ENCODE measurements at regions of chr19 and their contacts with region 1.

Region 1: GRCh38 chr19:13604902-13605586 is 98.8 kb upstream of the CACNA1A start:
- DNase-seq: no peak
- ATAC-seq: no peak
- H3K4me3 Mint-ChIP-seq: no peak overlapping the region
- H3K27ac Mint-ChIP-seq: no peak overlapping the region
- H3K4me1 Mint-ChIP-seq: peaks cover 6% of the 10 kb centered on the region
- H3K27me3 Mint-ChIP-seq: peaks cover 9% of the 10 kb centered on the region

Region 2: DNA sequence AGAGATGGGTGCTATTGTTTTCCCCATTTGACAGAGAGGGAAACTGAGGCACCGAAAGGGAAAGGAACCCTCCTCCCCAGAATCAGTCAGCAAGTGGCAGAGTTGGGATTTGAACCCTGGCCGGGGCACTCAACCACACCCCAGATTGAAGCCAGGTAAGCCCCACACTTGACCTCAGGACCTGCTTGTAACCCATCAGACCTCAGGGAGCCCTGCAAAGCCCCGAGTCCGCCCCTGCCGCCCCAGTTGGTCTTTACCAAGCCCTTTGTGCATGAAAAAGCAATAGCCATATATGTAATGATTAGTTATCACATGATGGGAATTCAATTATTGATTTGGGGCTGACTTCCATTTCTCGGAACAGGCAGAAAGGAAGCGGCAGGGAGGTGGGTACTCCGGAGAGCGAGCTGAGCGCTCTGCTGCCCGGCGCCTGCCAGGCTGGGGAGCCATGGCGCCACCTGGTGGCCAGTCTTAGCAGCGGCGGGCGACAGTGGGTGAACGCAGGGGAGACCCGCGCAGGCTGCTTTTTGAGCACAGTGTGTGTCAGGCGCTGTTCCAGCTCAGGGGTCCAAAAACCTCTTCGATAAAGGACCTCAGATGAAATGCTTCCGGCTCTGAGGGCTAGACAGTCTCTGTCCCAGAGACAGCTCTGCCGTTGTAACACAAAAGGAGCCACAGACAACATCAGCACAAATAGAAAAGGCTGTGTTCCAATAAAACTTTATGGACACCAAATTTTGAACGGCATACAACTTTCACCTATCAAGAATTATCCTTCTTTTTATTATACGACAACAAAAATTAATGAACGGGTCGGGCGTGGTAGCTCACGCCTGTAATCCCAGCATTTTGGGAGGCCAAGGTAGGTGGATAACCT is 15.8 kb before region 1 on chr19:
- CTCF ChIA-PET with region 1: interaction called, 10 read pairs
- DNase-seq: peak; percentile 82
- ATAC-seq: peak; percentile 95
- H3K4me3 Mint-ChIP-seq: no peak overlapping the region
- H3K27ac Mint-ChIP-seq: no peak overlapping the region
- H3K4me1 Mint-ChIP-seq: no peaks in the 10 kb centered on the region
- H3K27me3 Mint-ChIP-seq: no peaks in the 10 kb centered on the region

Measured in activated CD8-positive, alpha-beta memory T cell treated with anti-CD3 and anti-CD28 coated beads, Interleukin-2, amount 10 ng/mL, durations not matched to agents 7 days and 5 days (primary cell).